Left ventricle myocardium inferior (tissue), 1 donor: ENCODE measurements at regions of chr1 and their contacts with region 1.

Region 1: GRCh38 chr1:176559878-176560277 is 96.9 kb downstream of the PAPPA2 start:
- DNase-seq: no peak
- H3K4me3 ChIP-seq: no peak overlapping the region
- H3K27ac ChIP-seq: no peak overlapping the region
- H3K4me1 ChIP-seq: no peaks in the 10 kb centered on the region
- H3K27me3 ChIP-seq: peaks cover 22% of the 10 kb centered on the region
- CTCF ChIP-seq: peak; percentile 87

Region 2: DNA sequence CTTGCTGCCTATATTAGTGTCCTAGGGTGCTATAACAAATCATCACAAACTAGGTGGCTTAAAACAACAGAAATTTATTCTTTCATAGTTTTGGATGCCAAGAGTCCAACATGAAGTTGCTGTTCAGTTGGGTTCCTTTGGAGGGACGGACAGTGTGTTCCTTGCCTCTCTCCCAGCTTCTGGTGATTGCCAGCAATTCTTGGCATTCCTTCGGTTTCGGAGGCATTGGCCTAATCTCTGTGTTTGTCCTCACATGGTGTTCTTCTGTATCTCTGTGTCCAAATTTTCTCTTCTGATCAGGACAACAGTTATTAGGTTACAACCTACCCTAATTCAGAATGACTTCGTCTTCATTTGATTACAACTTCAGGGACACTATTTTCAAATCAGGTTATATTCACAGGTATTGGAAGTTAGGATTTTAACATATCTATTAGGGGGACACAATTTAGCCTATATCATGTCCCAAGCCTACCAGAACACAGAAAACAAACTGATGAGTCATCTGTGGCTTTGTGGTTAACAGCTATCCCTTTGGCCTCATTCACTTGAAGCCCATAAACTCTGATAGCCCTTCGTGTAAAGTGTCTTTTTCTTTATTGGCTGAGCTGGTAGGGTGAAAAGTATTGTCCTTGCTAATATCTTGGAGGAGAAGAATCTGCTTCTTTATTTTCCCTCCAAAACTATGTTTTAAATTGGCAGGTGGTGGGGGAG is 180.1 kb before region 1 on chr1:
- intact Hi-C with region 1: no loop called
- DNase-seq: no peak
- H3K4me3 ChIP-seq: no peak overlapping the region
- H3K27ac ChIP-seq: no peak overlapping the region
- H3K4me1 ChIP-seq: no peaks in the 10 kb centered on the region
- H3K27me3 ChIP-seq: no peaks in the 10 kb centered on the region
- CTCF ChIP-seq: no peak

Region 3: GRCh38 chr1:176682830-176683535 is 123.1 kb after region 1 on chr1:
- intact Hi-C with region 1: loop called (anchors 10 kb)
- DNase-seq: no peak
- H3K4me3 ChIP-seq: no peak overlapping the region
- H3K27ac ChIP-seq: no peak overlapping the region
- H3K4me1 ChIP-seq: peaks cover 8% of the 10 kb centered on the region
- H3K27me3 ChIP-seq: no peaks in the 10 kb centered on the region
- CTCF ChIP-seq: no peak

Region 4: GRCh38 chr1:176754676-176755075 is 194.8 kb after region 1 on chr1:
- intact Hi-C with region 1: no loop called
- DNase-seq: no peak
- H3K4me3 ChIP-seq: no peak overlapping the region
- H3K27ac ChIP-seq: no peak overlapping the region
- H3K4me1 ChIP-seq: no peaks in the 10 kb centered on the region
- H3K27me3 ChIP-seq: no peaks in the 10 kb centered on the region
- CTCF ChIP-seq: no peak

Region 5: GRCh38 chr1:176773038-176773437 is 213.2 kb after region 1 on chr1:
- intact Hi-C with region 1: no loop called
- DNase-seq: no peak
- H3K4me3 ChIP-seq: no peak overlapping the region
- H3K27ac ChIP-seq: no peak overlapping the region
- H3K4me1 ChIP-seq: no peaks in the 10 kb centered on the region
- H3K27me3 ChIP-seq: no peaks in the 10 kb centered on the region
- CTCF ChIP-seq: no peak

Region 6: GRCh38 chr1:176801514-176802020 is 241.7 kb after region 1 on chr1:
- intact Hi-C with region 1: no loop called
- DNase-seq: no peak
- H3K4me3 ChIP-seq: no peak overlapping the region
- H3K27ac ChIP-seq: peak overlapping the region; percentile 39
- H3K4me1 ChIP-seq: peaks cover 28% of the 10 kb centered on the region
- H3K27me3 ChIP-seq: no peaks in the 10 kb centered on the region
- CTCF ChIP-seq: no peak

Region 7: GRCh38 chr1:176843352-176844297 is 283.7 kb after region 1 on chr1:
- intact Hi-C with region 1: loop called (anchors 5 kb)
- DNase-seq: no peak
- H3K4me3 ChIP-seq: no peak overlapping the region
- H3K27ac ChIP-seq: no peak overlapping the region
- H3K4me1 ChIP-seq: peaks cover 26% of the 10 kb centered on the region
- H3K27me3 ChIP-seq: no peaks in the 10 kb centered on the region
- CTCF ChIP-seq: peak; percentile 72

Region 8: GRCh38 chr1:176880954-176881595 is 321.2 kb after region 1 on chr1:
- intact Hi-C with region 1: loop called (anchors 5 kb)
- DNase-seq: peak; percentile 61
- H3K4me3 ChIP-seq: no peak overlapping the region
- H3K27ac ChIP-seq: no peak overlapping the region
- H3K4me1 ChIP-seq: no peaks in the 10 kb centered on the region
- H3K27me3 ChIP-seq: no peaks in the 10 kb centered on the region
- CTCF ChIP-seq: peak; percentile 85